Cardiac septum (tissue), 1 donor: ENCODE measurements at regions of chr6 and their contacts with region 1.

Region 1: DNA sequence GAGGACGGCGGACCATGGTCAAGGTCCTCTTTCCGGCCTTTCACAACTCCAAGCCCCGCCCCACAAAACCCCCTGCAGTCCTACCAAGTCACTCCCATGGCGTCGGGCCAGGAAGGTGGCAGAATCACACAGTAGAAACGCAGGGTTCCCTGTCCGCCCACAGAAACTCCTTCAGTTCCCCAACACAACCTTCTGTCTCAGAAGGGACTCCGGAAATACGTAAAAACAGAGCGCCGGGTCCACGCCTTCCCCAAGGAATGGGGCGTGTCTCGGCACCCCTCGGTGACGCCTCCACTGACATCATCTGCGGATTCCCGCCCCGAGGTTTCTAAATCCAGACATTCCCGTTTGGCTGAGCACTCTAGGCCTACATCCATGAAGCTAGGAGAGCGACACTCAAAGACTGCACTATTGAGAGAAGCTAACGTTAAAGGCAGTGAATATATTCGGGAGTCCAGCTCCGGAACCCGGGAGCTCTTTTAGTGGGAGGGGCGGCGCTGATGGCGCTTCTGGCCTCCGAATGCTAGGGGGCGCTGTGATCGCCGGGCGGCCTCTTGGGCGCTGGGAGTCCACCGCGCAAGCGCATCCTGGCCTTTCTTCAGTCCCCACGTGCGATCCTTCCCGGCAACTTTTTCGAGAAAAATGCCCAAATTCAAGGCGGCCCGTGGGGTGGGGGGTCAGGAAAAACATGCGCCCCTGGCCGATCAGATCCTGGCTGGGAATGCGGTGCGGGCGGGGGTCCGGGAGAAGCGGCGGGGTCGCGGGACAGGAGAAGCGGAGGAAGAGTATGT is at the starts of genes BYSL and MED20:
- DNase-seq: peak; percentile 97
- total RNA-seq, gene BYSL: 11.3 TPM
- total RNA-seq, gene MED20: 16.5 TPM

Region 2: GRCh38 chr6:41846666-41847237 is 74.4 kb before region 1 on chr6:
- intact Hi-C with region 1: loop called (anchors 5 kb)
- DNase-seq: no peak

Region 3: DNA sequence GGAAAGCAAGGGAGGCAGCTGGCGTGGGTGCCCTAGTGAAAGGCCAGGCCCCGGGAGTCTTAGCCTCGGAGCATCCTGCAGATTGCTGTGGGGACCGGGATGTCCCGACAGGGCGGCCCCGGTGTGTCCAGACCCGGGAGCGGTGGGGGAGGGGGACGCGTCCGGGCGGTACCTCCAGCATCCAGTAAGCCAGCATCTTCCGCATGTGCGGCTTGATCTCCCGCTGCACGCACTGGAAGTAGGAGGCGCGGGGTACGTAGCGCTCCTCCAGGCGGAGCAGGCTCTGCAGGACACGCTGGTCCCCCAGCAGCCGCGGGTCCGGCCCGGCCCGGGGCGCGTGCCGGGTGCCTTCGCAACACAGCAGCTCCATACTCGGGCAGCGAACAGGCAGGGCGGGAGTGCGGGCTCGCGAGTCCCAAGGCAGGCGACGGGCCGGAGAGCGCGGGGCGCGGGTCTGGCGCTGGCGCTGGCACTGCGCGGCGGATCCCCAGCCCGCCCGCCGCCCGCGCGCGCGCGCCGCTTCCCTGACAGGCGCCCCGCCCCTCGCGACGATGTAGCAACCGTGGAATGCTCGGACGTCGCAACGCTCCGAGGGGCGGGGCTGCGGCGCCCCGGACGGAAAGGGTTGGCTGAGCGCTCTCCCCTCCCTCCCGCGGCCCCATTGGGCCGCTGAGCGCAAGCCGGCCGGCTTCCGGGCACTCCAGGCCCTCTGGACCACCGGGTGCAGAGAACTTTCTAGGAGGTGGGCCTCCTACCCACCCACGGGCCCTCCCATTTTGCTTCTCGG is 20.4 kb after region 1 on chr6 and contains the start of gene CCND3:
- intact Hi-C with region 1: loop called (anchors 2 kb)
- DNase-seq: peak; percentile 97
- total RNA-seq, gene CCND3: 33.5 TPM

Region 4: DNA sequence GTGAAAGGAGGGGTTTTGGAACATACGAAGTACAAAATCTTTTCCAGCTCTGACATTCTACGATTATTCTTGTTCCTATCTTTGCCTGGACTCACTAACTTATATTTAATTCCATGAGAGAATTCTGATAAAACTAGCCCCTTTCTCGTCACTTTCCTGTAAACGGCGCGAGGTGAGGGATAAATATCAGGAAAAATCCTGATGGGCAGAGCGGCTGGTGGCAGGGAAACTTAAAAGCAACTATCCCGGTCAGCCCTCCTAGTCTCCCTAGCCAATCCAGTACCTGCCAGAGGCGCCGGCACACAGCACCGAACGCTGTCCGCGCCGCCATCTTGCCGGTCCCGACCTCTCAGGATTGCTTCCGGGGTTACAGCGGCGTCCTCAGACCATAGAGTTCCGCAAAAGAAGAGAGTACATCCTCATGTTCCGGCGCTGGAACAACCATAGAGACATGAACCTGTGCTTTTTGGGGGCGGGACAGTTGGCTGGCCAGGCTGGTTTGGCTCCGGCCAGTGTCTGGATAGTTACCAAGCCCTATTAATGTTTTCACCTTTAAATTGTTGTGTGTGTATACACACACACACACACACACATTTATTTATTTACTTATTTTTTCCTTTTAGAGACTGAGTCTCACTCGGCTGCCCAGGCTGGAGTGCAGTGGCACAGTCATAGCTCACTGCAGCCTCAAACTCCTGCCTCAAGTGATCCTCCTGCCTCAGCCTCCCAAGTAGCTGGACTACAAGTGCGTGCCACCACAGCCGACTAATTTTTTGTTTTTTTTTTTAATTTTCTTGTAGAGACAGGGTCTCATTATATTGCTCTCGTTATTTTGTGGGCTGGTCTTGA is 296.6 kb after region 1 on chr6 and contains the start of gene MRPS10:
- intact Hi-C with region 1: loop called (anchors 5 kb)
- DNase-seq: peak; percentile 97
- total RNA-seq, gene MRPS10: 54.9 TPM

Region 5: GRCh38 chr6:42428326-42429041 is 507.4 kb after region 1 on chr6:
- intact Hi-C with region 1: no loop called
- DNase-seq: peak; percentile 81